ENCODE measurements at regions of chr6 and their contacts with region 1.

Region 1: DNA sequence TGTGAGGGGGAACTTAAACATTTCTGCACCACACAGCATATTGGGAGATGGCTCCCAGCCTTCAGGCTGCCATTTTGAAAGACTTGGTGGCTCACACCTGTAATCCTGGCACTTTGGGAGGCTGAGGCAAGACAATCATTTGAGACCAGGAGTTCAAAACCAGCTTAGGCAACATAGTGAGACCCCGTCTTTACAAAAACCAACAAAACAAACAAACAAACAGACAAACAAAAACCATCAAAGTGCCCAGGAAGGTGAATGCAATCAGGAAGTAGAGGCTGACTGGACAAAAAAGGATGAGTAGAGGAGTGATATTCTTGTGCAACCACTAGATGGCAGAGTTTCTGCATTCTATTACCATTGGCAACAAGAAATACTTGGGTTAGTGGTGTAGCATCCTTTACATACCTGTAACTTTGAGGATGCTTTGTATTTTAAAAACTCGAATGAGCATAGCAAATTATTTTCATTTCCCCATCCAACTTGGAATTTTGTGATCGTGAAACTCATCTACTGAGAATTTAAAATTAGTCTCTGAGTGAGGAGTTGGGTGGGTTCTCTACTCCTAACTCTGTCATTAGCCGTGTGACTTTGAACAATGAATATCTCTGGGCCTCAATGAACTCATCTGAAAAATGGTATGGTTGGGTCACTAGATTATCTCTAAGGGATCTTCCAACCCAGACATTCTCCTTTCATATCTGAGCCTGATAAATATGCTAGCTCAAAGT is 84.4 kb downstream of the CRYBG1 start:
- DNase-seq: peak in 7 of 9 donors; percentile 55 to 81 (median 70)
- ATAC-seq: peak; percentile 81
- H3K4me3 ChIP-seq: no peak overlapping the region
- H3K4me3 Mint-ChIP-seq: no peak overlapping the region
- H3K27ac ChIP-seq: no peak overlapping the region
- H3K27ac Mint-ChIP-seq: peak overlapping the region in 1 of 9 donors; percentile 43
- H3K4me1 ChIP-seq: peaks cover 0 to 5% of the 10 kb centered on the region in 2 donors
- H3K4me1 Mint-ChIP-seq: peaks cover 5 to 16% (median 14%) of the 10 kb centered on the region in 7 donors
- H3K27me3 ChIP-seq: peaks cover 0 to 4% of the 10 kb centered on the region in 2 donors
- H3K27me3 Mint-ChIP-seq: peaks cover 19 to 36% (median 27%) of the 10 kb centered on the region in 5 donors

Region 2: DNA sequence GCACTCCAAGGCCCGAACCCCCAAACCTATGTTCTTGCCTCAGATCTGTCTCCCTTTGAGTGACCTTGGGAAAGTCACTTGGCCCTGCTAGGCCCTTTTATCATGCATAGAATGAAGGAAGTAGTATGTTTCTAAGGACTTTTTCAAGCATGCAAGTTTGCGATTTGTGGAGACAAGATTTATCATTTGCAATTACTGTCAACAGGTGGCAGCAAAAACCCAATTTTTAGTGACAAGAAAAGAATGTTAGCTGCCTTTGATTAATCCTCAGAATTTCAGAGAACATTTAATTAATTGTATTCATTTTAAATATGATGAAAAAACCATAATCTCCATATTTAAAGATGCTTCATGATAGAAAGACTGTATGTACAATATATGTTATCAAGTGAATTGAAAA is 1013.7 kb before region 1 on chr6:
- CTCF ChIA-PET with region 1: interaction called, 3 read pairs
- POLR2A ChIA-PET with region 1: no interaction called
- intact Hi-C with region 1: loop called in 1 of 2 experiments (anchors 2 kb)
- DNase-seq: peak in 6 of 9 donors; percentile 4 to 43 (median 34)
- ATAC-seq: no peak
- H3K4me3 ChIP-seq: no peak overlapping the region
- H3K4me3 Mint-ChIP-seq: no peak overlapping the region
- H3K27ac ChIP-seq: no peak overlapping the region
- H3K27ac Mint-ChIP-seq: no peak overlapping the region
- H3K4me1 ChIP-seq: no peaks in the 10 kb centered on the region
- H3K4me1 Mint-ChIP-seq: peaks cover 0 to 3% (median 0%) of the 10 kb centered on the region in 7 donors
- H3K27me3 ChIP-seq: no peaks in the 10 kb centered on the region
- H3K27me3 Mint-ChIP-seq: peaks cover 0 to 36% (median 7%) of the 10 kb centered on the region in 5 donors

Region 3: GRCh38 chr6:105620878-105621277 is 824.1 kb before region 1 on chr6:
- CTCF ChIA-PET with region 1: no interaction called
- POLR2A ChIA-PET with region 1: no interaction called
- intact Hi-C with region 1: no loop called
- DNase-seq: no peak
- ATAC-seq: no peak
- H3K4me3 ChIP-seq: no peak overlapping the region
- H3K4me3 Mint-ChIP-seq: peak overlapping the region in 1 of 10 donors; percentile 1
- H3K27ac ChIP-seq: no peak overlapping the region
- H3K27ac Mint-ChIP-seq: peak overlapping the region in 1 of 9 donors; percentile 64
- H3K4me1 ChIP-seq: no peaks in the 10 kb centered on the region
- H3K4me1 Mint-ChIP-seq: peaks cover 0 to 22% (median 0%) of the 10 kb centered on the region in 7 donors
- H3K27me3 ChIP-seq: no peaks in the 10 kb centered on the region
- H3K27me3 Mint-ChIP-seq: peaks cover 0 to 3% (median 0%) of the 10 kb centered on the region in 5 donors

Region 4: GRCh38 chr6:106339334-106340029 is 105.5 kb before region 1 on chr6:
- CTCF ChIA-PET with region 1: interaction called, 3 read pairs
- POLR2A ChIA-PET with region 1: no interaction called
- intact Hi-C with region 1: loop called (anchors 1 kb)
- DNase-seq: peak in 8 of 9 donors; percentile 19 to 50 (median 35)
- ATAC-seq: peak; percentile 88
- H3K4me3 ChIP-seq: no peak overlapping the region
- H3K4me3 Mint-ChIP-seq: peak overlapping the region in 7 of 10 donors; percentile 15 to 67 (median 44)
- H3K27ac ChIP-seq: no peak overlapping the region
- H3K27ac Mint-ChIP-seq: no peak overlapping the region
- H3K4me1 ChIP-seq: no peaks in the 10 kb centered on the region
- H3K4me1 Mint-ChIP-seq: peaks cover 0 to 9% (median 6%) of the 10 kb centered on the region in 7 donors
- H3K27me3 ChIP-seq: no peaks in the 10 kb centered on the region
- H3K27me3 Mint-ChIP-seq: peaks cover 14 to 44% (median 20%) of the 10 kb centered on the region in 5 donors

Region 5: GRCh38 chr6:106411643-106412200 is 33.2 kb before region 1 on chr6:
- CTCF ChIA-PET with region 1: no interaction called
- POLR2A ChIA-PET with region 1: no interaction called
- intact Hi-C with region 1: no loop called
- DNase-seq: no peak
- ATAC-seq: no peak
- H3K4me3 ChIP-seq: no peak overlapping the region
- H3K4me3 Mint-ChIP-seq: no peak overlapping the region
- H3K27ac ChIP-seq: no peak overlapping the region
- H3K27ac Mint-ChIP-seq: no peak overlapping the region
- H3K4me1 ChIP-seq: no peaks in the 10 kb centered on the region
- H3K4me1 Mint-ChIP-seq: no peaks in the 10 kb centered on the region
- H3K27me3 ChIP-seq: no peaks in the 10 kb centered on the region
- H3K27me3 Mint-ChIP-seq: peaks cover 12 to 66% (median 14%) of the 10 kb centered on the region in 5 donors

Region 6: DNA sequence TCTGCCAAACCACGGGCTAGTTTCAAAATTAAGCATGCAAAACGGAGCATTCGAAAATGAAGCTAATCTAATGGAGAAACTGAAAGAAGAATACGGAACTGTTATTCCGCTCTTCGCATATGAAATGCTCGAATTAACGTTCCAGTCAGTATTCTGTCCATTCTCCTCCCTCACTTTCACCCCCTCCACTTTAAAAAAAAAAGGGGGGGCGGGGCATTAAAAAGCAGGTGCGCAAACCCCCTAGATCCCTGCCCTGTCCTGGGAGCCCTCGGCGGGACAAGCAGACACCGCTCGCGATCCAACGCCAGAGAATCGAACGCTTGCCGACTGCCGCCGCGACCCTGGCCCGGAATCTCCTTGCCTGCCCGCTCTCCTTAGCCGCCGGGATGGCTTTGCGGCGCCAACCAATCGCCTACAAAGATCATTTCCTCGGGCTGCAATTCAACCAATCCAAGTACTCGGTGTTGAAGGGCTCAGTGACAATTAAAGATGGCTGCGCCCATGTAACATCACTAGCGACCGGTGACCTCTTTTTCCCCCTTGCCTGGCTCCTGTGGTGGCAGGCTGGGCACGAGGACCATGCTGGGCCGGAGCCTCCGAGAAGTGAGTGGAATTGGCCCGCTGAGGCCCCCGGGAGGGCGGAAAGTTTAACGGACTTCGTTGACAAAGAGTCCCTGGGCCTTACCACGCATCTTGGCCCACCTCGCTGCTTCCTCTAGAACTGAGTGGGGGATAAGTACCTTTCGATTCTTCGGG is 184.3 kb after region 1 on chr6 and contains the starts of genes QRSL1 and RTN4IP1:
- CTCF ChIA-PET with region 1: no interaction called
- POLR2A ChIA-PET with region 1: no interaction called
- intact Hi-C with region 1: loop called in 1 of 2 experiments (anchors 1 kb)
- DNase-seq: peak; percentile 67 to 94 (median 90)
- ATAC-seq: peak; percentile 98
- H3K4me3 ChIP-seq: peak within 1 kb of the TSS; percentile 87
- H3K4me3 Mint-ChIP-seq: peak within 1 kb of the TSS; percentile 93 to 100 (median 98)
- H3K27ac ChIP-seq: peak within 1 kb of the TSS; percentile 94
- H3K27ac Mint-ChIP-seq: peak within 1 kb of the TSS; percentile 96 to 99 (median 98)
- H3K4me1 ChIP-seq: peaks cover 7 to 13% of the 10 kb centered on the region in 2 donors
- H3K4me1 Mint-ChIP-seq: peaks cover 13 to 67% (median 38%) of the 10 kb centered on the region in 7 donors
- H3K27me3 ChIP-seq: no peaks in the 10 kb centered on the region
- H3K27me3 Mint-ChIP-seq: no peaks in the 10 kb centered on the region
- total RNA-seq, gene QRSL1: 8.0 to 14.8 (median 13.6) TPM
- total RNA-seq, gene RTN4IP1: 5.1 to 6.4 (median 5.6) TPM

Region 7: DNA sequence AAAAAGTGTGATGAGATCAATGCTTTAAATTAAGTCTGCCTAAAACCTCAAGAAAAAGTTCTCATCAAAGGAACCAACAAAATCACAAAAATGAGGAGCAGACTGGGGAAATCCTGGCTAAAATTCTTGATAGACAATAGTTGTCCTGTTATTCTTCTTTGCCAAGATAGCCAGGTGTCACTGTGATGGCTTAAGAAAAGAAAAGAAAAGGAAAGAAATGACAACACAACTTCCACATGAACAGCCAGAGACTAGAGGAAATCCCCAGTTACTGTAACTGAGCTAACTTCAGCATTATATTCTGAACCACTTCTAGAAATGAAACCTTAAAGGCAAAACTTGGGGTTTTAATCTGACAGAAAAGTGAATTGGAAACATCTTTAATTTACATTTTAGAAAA is 400.0 kb after region 1 on chr6:
- CTCF ChIA-PET with region 1: no interaction called
- POLR2A ChIA-PET with region 1: no interaction called
- intact Hi-C with region 1: no loop called
- DNase-seq: no peak
- ATAC-seq: no peak
- H3K4me3 ChIP-seq: no peak overlapping the region
- H3K4me3 Mint-ChIP-seq: no peak overlapping the region
- H3K27ac ChIP-seq: no peak overlapping the region
- H3K27ac Mint-ChIP-seq: no peak overlapping the region
- H3K4me1 ChIP-seq: no peaks in the 10 kb centered on the region
- H3K4me1 Mint-ChIP-seq: peaks cover 0 to 2% (median 0%) of the 10 kb centered on the region in 7 donors
- H3K27me3 ChIP-seq: no peaks in the 10 kb centered on the region
- H3K27me3 Mint-ChIP-seq: peaks cover 5 to 26% (median 17%) of the 10 kb centered on the region in 5 donors

Region 8: DNA sequence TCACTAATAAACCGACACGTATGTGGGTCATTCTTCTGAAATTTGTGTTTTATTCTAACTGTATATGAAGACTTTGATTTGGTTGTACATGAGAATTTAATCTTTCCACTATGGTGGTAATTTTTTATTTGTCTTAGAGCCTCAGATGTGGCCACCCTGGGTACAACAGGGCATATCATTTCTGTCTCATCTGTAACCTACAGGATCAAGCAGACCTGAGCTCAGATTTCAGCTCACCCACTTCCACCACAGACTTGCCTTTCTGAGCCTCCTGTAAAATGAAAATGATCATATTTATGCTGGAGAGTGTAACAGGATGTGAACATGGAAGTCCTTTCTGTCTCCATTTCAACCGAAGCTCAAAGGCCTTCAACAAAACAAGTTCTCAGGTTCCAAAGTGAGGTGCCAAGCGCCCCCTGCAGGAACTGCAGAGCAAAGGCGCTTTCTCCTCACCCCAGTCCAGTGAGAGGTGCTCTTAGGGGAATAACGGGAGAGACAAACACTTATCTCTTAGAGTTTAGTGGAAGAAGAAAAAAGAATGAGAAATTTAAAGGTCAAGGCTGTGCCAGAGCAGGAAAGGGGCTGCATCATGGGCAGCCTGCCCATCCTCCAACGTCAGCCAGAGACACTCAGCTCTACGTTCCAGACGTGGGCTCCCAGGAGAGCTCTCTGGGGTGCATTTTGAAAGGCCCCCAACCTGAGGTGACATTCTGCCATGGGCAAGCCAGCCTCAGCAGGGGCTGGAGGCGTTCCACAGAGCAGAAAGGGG is 552.6 kb after region 1 on chr6:
- CTCF ChIA-PET with region 1: interaction called, 7 read pairs
- POLR2A ChIA-PET with region 1: no interaction called
- intact Hi-C with region 1: loop called (anchors 1 kb)
- DNase-seq: peak in 8 of 9 donors; percentile 11 to 53 (median 39)
- ATAC-seq: peak; percentile 60
- H3K4me3 ChIP-seq: no peak overlapping the region
- H3K4me3 Mint-ChIP-seq: peak overlapping the region in 1 of 10 donors; percentile 26
- H3K27ac ChIP-seq: no peak overlapping the region
- H3K27ac Mint-ChIP-seq: peak overlapping the region in 1 of 9 donors; percentile 77
- H3K4me1 ChIP-seq: no peaks in the 10 kb centered on the region
- H3K4me1 Mint-ChIP-seq: peaks cover 4 to 7% (median 5%) of the 10 kb centered on the region in 7 donors
- H3K27me3 ChIP-seq: no peaks in the 10 kb centered on the region
- H3K27me3 Mint-ChIP-seq: peaks cover 0 to 1% (median 0%) of the 10 kb centered on the region in 5 donors